Naive thymus-derived CD8-positive, alpha-beta T cell (primary cell): ENCODE measurements at regions of chr17 and their contacts with region 1.

Region 1: GRCh38 chr17:4709794-4710692 is at the start of gene ARRB2:
- DNase-seq: peak; percentile 93 to 99 (median 99)
- ATAC-seq: peak; percentile 79
- H3K4me3 Mint-ChIP-seq: peak within 1 kb of the TSS; percentile 74 to 99 (median 97)
- H3K27ac Mint-ChIP-seq: peak within 1 kb of the TSS; percentile 91 to 99 (median 98)
- H3K4me1 Mint-ChIP-seq: peaks cover 30 to 60% (median 54%) of the 10 kb centered on the region in 4 donors
- H3K27me3 Mint-ChIP-seq: no peaks in the 10 kb centered on the region
- polyA plus RNA-seq, gene ARRB2: 47.0 to 60.5 (median 49.4) TPM

Region 2: DNA sequence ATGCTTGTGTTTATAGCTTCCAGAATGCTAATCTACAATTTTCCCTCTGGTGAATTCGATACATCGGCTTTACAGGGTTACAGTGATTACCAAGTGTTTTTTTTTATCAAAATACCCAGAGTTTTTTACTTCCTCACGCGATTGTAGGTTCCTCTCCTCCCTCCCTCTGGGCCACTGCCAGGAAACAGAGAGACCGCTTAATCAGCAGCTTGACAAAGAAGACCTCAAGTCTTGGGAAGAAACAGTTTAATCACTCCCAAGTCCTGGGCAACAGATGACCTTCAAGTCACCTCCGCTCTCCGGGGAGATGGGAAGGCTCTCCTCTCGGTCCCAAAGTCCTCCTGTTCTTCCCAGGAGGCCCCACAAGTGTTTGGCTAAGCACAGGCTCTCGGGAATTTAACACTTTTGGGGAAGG is 102.3 kb before region 1 on chr17:
- POLR2A ChIA-PET with region 1: no interaction called
- DNase-seq: no peak
- ATAC-seq: no peak
- H3K4me3 Mint-ChIP-seq: no peak overlapping the region
- H3K27ac Mint-ChIP-seq: no peak overlapping the region
- H3K4me1 Mint-ChIP-seq: peaks cover 0 to 6% (median 1%) of the 10 kb centered on the region in 4 donors
- H3K27me3 Mint-ChIP-seq: peaks cover 12 to 28% (median 14%) of the 10 kb centered on the region in 5 donors

Region 3: GRCh38 chr17:4721203-4722135 is 11.4 kb after region 1 on chr17:
- POLR2A ChIA-PET with region 1: interaction called, 20 read pairs
- DNase-seq: no peak
- ATAC-seq: peak; percentile 23 to 64
- H3K4me3 Mint-ChIP-seq: peak overlapping the region in 2 of 10 donors; percentile 19 to 30
- H3K27ac Mint-ChIP-seq: peak overlapping the region; percentile 42 to 78 (median 55)
- H3K4me1 Mint-ChIP-seq: peaks cover 15 to 42% (median 22%) of the 10 kb centered on the region in 4 donors
- H3K27me3 Mint-ChIP-seq: no peaks in the 10 kb centered on the region

Region 4: DNA sequence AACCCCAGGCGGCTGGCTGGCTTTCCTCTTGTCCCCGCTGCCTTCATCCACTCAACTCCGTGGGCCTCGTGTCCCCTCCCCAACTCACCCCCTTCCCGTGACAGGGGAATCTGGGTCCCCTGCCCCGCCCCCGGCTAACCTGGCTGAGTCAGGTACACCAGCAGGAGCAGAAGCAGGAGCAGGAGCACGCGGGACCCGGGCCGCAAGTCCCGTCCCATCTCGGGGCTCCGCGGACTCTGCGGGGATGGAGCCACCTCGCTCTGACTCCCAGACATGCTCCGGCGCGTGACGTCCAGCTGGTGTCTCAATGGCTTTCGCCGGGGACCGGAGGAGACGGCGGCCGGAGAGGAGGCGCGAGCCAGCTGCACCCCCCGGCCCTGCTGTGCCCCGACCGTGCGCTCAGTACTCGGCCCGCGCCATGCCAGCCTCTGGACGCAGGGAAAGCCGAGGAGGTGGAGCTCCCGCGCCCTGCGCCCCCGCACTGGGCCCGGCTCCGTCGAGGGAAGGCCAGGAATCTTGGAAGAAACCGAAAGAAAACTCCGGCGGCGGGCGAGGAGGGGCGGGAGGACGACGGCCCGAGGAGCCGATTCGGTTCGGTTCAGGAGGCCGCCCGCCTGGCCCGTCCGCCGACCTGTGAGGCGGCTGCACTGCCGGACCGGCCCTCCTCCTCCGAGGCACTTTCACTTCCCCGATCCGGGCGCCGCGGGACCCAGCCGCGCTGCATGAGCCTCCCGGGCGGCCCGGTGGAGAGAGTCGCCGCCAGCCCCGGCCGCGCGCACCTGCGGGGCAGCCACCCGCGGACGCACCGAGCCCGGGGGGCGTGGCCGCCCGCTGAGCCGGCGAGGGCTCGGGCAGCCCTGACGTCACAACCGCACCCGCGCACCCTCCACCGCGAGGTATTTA is 29.3 kb after region 1 on chr17 and contains the starts of genes CXCL16 and ZMYND15:
- POLR2A ChIA-PET with region 1: interaction called, 24 read pairs
- DNase-seq: peak; percentile 50 to 83 (median 70)
- ATAC-seq: peak; percentile 72
- H3K4me3 Mint-ChIP-seq: peak within 1 kb of the TSS; percentile 83 to 94 (median 90)
- H3K27ac Mint-ChIP-seq: peak within 1 kb of the TSS; percentile 86 to 98 (median 94)
- H3K4me1 Mint-ChIP-seq: peaks cover 17 to 30% (median 22%) of the 10 kb centered on the region in 4 donors
- H3K27me3 Mint-ChIP-seq: peaks cover 0 to 13% (median 6%) of the 10 kb centered on the region in 5 donors
- polyA plus RNA-seq, gene CXCL16: 2.2 to 5.9 (median 2.5) TPM
- polyA plus RNA-seq, gene ZMYND15: 0.10 TPM in 1 of 3 donors, not detected in the others

Region 5: GRCh38 chr17:4796553-4796921 is 86.5 kb after region 1 on chr17:
- POLR2A ChIA-PET with region 1: interaction called, 45 read pairs
- DNase-seq: no peak
- ATAC-seq: no peak
- H3K4me3 Mint-ChIP-seq: peak overlapping the region; percentile 97 to 100 (median 100)
- H3K27ac Mint-ChIP-seq: peak overlapping the region; percentile 97 to 99 (median 99)
- H3K4me1 Mint-ChIP-seq: peaks cover 8 to 17% (median 16%) of the 10 kb centered on the region in 4 donors
- H3K27me3 Mint-ChIP-seq: peaks cover 0 to 5% (median 0%) of the 10 kb centered on the region in 5 donors

Region 6: GRCh38 chr17:4891411-4892342 is 181.6 kb after region 1 on chr17:
- POLR2A ChIA-PET with region 1: interaction called, 21 read pairs
- DNase-seq: no peak
- ATAC-seq: no peak
- H3K4me3 Mint-ChIP-seq: no peak overlapping the region
- H3K27ac Mint-ChIP-seq: peak overlapping the region in 1 of 10 donors; percentile 84
- H3K4me1 Mint-ChIP-seq: peaks cover 0 to 2% (median under 1%) of the 10 kb centered on the region in 4 donors
- H3K27me3 Mint-ChIP-seq: no peaks in the 10 kb centered on the region

Region 7: DNA sequence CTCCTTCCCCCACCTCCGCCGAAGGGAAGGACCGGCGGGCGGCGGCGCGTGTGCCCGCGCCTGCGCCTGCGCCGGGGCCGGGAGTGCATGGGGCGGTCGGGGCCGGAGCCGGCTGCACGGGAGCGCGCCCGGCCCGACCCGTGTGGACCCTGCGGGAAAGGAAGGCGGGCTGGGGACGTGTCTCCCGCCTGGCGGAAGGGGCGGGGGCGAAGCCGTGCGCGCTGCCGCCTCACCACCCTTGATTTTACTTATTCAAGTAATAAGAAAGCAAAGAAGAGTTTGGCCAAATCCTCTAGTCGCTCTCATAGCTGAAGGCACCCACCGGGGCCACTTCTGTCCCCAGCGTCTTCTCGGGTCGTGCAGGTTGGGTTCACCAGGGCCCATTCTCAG is 238.9 kb after region 1 on chr17:
- POLR2A ChIA-PET with region 1: interaction called, 15 read pairs
- DNase-seq: peak in 8 of 10 donors; percentile 58 to 85 (median 67)
- ATAC-seq: peak; percentile 41 to 47
- H3K4me3 Mint-ChIP-seq: peak overlapping the region; percentile 91 to 100 (median 98)
- H3K27ac Mint-ChIP-seq: peak overlapping the region; percentile 77 to 100 (median 95)
- H3K4me1 Mint-ChIP-seq: peaks cover 37 to 49% (median 43%) of the 10 kb centered on the region in 4 donors
- H3K27me3 Mint-ChIP-seq: no peaks in the 10 kb centered on the region